ENCODE measurements at regions of chr16 and their contacts with region 1.

Region 1: DNA sequence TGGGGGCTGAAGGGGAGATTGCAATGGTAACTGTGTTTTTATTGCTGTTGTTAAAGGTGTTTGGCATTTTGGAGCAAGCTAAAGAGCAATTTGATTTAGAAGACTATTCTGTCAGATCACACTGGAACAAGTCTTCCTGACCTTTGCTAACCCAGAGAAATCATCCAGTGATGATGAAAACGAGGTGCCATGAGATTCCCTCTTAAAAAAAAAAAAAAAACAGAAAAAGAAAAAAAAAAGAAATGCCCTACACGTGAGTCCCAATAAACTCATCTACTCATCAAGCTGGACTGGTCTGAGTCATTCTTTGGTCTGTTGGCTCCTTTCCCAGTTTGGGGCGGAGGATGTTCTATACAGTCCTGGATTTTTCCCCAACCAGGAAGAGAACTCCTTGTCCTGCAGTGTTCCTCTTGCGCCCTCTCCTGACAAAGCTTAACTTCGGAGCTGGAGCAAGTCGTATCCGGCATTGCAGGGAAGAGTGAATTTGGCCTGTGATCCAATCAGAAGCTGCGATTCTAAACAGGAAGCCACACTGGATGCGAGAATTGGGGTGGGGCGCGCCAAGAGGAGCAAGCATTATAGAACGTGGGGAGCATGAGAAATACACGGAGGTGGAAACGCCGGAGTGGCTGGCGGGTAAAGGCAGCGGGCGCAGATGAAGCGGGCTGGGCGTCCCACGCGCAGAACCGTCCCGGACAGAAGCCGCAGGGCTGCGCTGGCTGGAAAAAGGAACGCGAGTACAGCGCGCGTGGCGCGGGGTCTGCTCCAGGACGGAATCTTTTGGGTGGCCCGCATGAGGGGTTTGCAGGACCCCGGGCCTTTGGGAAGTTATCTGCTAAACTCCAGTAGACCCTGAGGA is 22.4 kb upstream of the CRYM start:
- DNase-seq: peak; percentile 97
- H3K4me3 ChIP-seq: peak overlapping the region; percentile 21 to 79 (median 52)
- H3K27ac ChIP-seq: peak overlapping the region; percentile 89 to 96 (median 94)
- H3K4me1 ChIP-seq: peaks cover 0 to 30% (median 15%) of the 10 kb centered on the region in 4 donors
- H3K27me3 ChIP-seq: no peaks in the 10 kb centered on the region
- CTCF ChIP-seq: peak; percentile 61 to 97 (median 83)
- EP300 ChIP-seq: peak; percentile 41
- POLR2A ChIP-seq: peak; percentile 58

Region 2: GRCh38 chr16:20806168-20807050 is 494.1 kb before region 1 on chr16 and contains the starts of genes ERI2 and REXO5:
- in situ Hi-C with region 1: no loop called
- intact Hi-C with region 1: loop called (anchors 10 kb)
- DNase-seq: peak; percentile 94
- H3K4me3 ChIP-seq: peak within 1 kb of the TSS; percentile 61 to 80 (median 74)
- H3K27ac ChIP-seq: peak within 1 kb of the TSS; percentile 91 to 93 (median 92)
- H3K4me1 ChIP-seq: peaks cover 0 to 16% (median 4%) of the 10 kb centered on the region in 4 donors
- H3K27me3 ChIP-seq: no peaks in the 10 kb centered on the region
- CTCF ChIP-seq: peak; percentile 16 to 44 (median 39)
- EP300 ChIP-seq: no peak
- POLR2A ChIP-seq: peak; percentile 75
- total RNA-seq, gene ERI2: 9.0 to 55.1 (median 30.0) TPM
- total RNA-seq, gene REXO5: 4.1 to 17.5 (median 6.4) TPM

Region 3: GRCh38 chr16:20938426-20938825 is 362.1 kb before region 1 on chr16:
- in situ Hi-C with region 1: no loop called
- intact Hi-C with region 1: no loop called
- DNase-seq: no peak
- H3K4me3 ChIP-seq: no peak overlapping the region
- H3K27ac ChIP-seq: peak overlapping the region in 2 of 4 donors; percentile 7 to 29
- H3K4me1 ChIP-seq: peaks cover 0 to 4% (median 0%) of the 10 kb centered on the region in 4 donors
- H3K27me3 ChIP-seq: no peaks in the 10 kb centered on the region
- CTCF ChIP-seq: no peak
- EP300 ChIP-seq: no peak
- POLR2A ChIP-seq: no peak

Region 4: GRCh38 chr16:21158208-21159110 is 142.1 kb before region 1 on chr16 and contains the start of gene LDAF1:
- in situ Hi-C with region 1: no loop called
- intact Hi-C with region 1: loop called (anchors 2 kb)
- DNase-seq: peak; percentile 91
- H3K4me3 ChIP-seq: peak within 1 kb of the TSS; percentile 69 to 93 (median 79)
- H3K27ac ChIP-seq: peak within 1 kb of the TSS; percentile 90 to 93 (median 92)
- H3K4me1 ChIP-seq: peaks cover 14 to 53% (median 37%) of the 10 kb centered on the region in 4 donors
- H3K27me3 ChIP-seq: no peaks in the 10 kb centered on the region
- CTCF ChIP-seq: no peak
- EP300 ChIP-seq: no peak
- POLR2A ChIP-seq: peak; percentile 75
- total RNA-seq, gene LDAF1: 23.6 to 71.0 (median 59.3) TPM

Measured in transverse colon (tissue), 4 donors.